ENCODE measurements at regions of chr2 and their contacts with region 1.

Region 1: GRCh38 chr2:25606892-25607291 is 66.5 kb downstream of the DTNB start:
- DNase-seq: no peak

Region 2: DNA sequence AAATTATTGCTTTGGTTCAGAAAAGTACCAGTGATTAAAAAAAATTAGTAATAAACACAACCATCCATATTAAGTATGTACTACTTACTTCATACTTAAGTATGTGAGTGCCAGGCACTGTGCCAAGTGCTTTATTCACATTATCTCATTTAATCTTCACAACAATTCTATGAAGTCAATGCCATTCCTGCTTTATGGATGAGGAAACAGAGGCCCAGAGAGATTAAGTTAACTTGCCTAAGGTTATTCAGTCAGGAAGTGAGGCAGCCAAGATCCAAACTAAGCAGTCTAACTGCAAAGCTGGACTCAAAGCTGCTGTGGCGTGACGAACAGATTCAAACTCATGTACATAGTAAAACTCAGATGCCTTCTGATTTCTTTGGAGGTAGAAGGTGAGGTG is 44.2 kb after region 1 on chr2:
- intact Hi-C with region 1: loop called in 1 of 2 experiments (anchors 10 kb)
- DNase-seq: no peak

Measured in posterior vena cava (tissue), 2 donors.